Activated T-helper 2 cell treated with anti-CD3 and anti-CD28 coated beads, Interferon-gamma antibody, Interleukin-2, Interleukin-4, amounts not matched to agents 10 μg/mL and 5 μg/mL and 100 μg/mL, durations not matched to agents 14 hours and 24 hours and 36 hours (primary cell): ENCODE measurements at regions of chr19 and their contacts with region 1.

Region 1: DNA sequence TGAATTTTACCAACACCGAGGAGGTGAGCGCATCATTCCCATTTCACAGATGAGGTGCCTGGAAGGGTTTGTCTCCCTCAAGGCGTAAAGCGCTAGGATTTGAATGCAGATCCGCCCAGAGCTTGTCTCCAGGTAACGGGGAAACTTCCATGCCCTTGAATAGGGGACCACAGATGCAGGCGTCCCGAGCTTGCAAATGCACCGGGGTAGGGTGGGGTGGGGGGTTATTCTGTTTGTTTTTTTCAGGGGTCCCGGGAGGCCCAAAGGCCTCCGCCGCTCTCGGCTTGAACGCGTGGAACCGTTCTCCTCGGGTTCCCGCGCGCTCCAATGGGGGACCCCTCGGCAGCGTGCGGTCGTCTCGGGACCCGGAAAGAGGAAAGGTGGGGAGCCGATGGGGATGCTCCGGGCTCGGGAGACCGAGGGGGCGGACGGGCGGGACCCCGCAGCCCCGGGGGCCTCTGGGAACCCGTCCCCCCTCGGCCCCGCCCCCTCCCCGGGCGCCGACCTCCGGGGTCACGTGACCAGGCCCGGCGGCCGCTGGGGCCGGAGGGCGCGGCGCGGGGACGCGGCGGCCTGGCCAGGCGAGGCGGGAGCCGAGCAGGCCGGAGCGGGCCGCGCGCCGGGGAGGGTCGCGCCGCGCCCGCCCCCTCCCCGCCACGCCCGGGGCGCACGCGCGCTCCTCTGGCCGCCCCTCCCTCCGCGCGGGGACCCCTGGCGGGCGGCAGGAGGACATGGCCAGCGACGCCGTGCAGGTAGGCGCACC is at the start of gene PKN1:
- DNase-seq: peak; percentile 48
- H3K4me3 Mint-ChIP-seq: peak within 1 kb of the TSS; percentile 84
- H3K27ac Mint-ChIP-seq: peak within 1 kb of the TSS; percentile 79
- H3K4me1 Mint-ChIP-seq: peaks cover 23% of the 10 kb centered on the region
- H3K27me3 Mint-ChIP-seq: peaks cover 5% of the 10 kb centered on the region
- total RNA-seq, gene PKN1: 171 and 172 TPM in 2 replicates

Region 2: GRCh38 chr19:14419106-14419813 is 13.7 kb before region 1 on chr19 and contains the start of gene DDX39A:
- intact Hi-C with region 1: loop called (anchors 2 kb)
- DNase-seq: peak; percentile 99
- H3K4me3 Mint-ChIP-seq: peak within 1 kb of the TSS; percentile 93
- H3K27ac Mint-ChIP-seq: peak within 1 kb of the TSS; percentile 97
- H3K4me1 Mint-ChIP-seq: peaks cover 20% of the 10 kb centered on the region
- H3K27me3 Mint-ChIP-seq: no peaks in the 10 kb centered on the region
- total RNA-seq, gene DDX39A: 268 TPM in 2 replicates

Region 3: GRCh38 chr19:14472202-14472938 is 39.4 kb after region 1 on chr19:
- intact Hi-C with region 1: loop called (anchors 5 kb)
- DNase-seq: peak; percentile 75
- H3K4me3 Mint-ChIP-seq: no peak overlapping the region
- H3K27ac Mint-ChIP-seq: no peak overlapping the region
- H3K4me1 Mint-ChIP-seq: peaks cover 16% of the 10 kb centered on the region
- H3K27me3 Mint-ChIP-seq: peaks cover 15% of the 10 kb centered on the region

Region 4: GRCh38 chr19:14487370-14488125 is 54.6 kb after region 1 on chr19:
- intact Hi-C with region 1: loop called (anchors 2 kb)
- DNase-seq: no peak
- H3K4me3 Mint-ChIP-seq: no peak overlapping the region
- H3K27ac Mint-ChIP-seq: no peak overlapping the region
- H3K4me1 Mint-ChIP-seq: peaks cover 5% of the 10 kb centered on the region
- H3K27me3 Mint-ChIP-seq: no peaks in the 10 kb centered on the region

Region 5: GRCh38 chr19:14582894-14583340 is 149.9 kb after region 1 on chr19 and contains the start of gene CLEC17A:
- intact Hi-C with region 1: no loop called
- DNase-seq: no peak
- H3K4me3 Mint-ChIP-seq: no peak within 1 kb of the TSS
- H3K27ac Mint-ChIP-seq: no peak within 1 kb of the TSS
- H3K4me1 Mint-ChIP-seq: peaks cover 15% of the 10 kb centered on the region
- H3K27me3 Mint-ChIP-seq: no peaks in the 10 kb centered on the region
- total RNA-seq, gene CLEC17A: 0.14 TPM in 1 of 2 replicates, not detected in the other